Cardiac septum (tissue), 1 donor: ENCODE measurements at regions of chr10 and their contacts with region 1.

Region 1: GRCh38 chr10:86872757-86873156 is 84.7 kb downstream of the MMRN2 start:
- DNase-seq: no peak

Region 2: DNA sequence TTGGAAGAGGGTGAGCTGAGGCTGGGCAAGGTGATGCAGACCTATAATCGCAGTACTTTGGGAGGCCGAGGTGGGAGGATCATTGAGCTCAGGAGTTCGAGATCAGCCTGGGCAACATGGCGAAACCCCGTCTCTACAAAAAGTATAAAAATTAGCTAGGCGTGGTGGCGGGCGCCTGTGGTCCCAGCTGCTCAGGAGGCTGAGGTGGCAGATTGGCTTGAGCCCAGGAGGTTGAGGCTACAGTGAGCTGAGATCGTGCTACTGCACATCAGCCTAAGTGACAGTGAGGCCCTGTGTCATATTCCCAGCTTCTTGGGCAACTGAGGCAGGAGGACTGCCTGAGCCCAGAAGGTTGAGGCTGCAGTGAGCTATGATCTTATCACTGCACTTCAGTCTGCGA is 102.8 kb before region 1 on chr10:
- intact Hi-C with region 1: loop called (anchors 5 kb)
- DNase-seq: no peak

Region 3: GRCh38 chr10:86824151-86824550 is 48.6 kb before region 1 on chr10:
- intact Hi-C with region 1: no loop called
- DNase-seq: no peak